ENCODE measurements at regions of chr5 and their contacts with region 1.

Region 1: GRCh38 chr5:140207250-140207964 is 32.4 kb downstream of the CYSTM1 start:
- DNase-seq: no peak
- ATAC-seq: no peak
- H3K4me3 Mint-ChIP-seq: no peak overlapping the region
- H3K27ac Mint-ChIP-seq: no peak overlapping the region; the same call in 1 of the 2 replicates
- H3K4me1 Mint-ChIP-seq: peaks cover 12% of the 10 kb centered on the region
- H3K27me3 Mint-ChIP-seq: no peaks in the 10 kb centered on the region
- CTCF ChIP-seq: no peak

Region 2: DNA sequence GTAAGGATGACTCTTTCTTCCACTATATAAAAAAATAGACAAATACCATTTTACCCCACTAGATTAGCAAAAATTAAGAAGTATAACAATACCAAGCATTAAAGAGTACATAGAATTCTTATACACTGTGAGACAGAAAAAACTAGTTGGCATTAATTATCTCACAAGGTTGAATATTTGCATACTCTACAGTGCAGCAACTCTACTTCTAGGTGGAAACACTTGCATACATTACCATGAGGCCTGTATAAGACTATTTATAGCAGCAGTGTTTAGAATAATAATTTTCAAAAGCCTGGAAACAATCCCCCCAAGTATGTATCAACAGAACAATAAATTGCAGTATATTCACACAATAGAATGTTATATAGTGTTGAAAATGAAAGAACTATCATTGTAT is 112.5 kb before region 1 on chr5:
- CTCF ChIA-PET with region 1: no interaction called
- POLR2A ChIA-PET with region 1: no interaction called
- DNase-seq: no peak
- ATAC-seq: no peak
- H3K4me3 Mint-ChIP-seq: no peak overlapping the region
- H3K27ac Mint-ChIP-seq: no peak overlapping the region
- H3K4me1 Mint-ChIP-seq: no peaks in the 10 kb centered on the region
- H3K27me3 Mint-ChIP-seq: peaks cover 25% of the 10 kb centered on the region
- CTCF ChIP-seq: no peak

Region 3: DNA sequence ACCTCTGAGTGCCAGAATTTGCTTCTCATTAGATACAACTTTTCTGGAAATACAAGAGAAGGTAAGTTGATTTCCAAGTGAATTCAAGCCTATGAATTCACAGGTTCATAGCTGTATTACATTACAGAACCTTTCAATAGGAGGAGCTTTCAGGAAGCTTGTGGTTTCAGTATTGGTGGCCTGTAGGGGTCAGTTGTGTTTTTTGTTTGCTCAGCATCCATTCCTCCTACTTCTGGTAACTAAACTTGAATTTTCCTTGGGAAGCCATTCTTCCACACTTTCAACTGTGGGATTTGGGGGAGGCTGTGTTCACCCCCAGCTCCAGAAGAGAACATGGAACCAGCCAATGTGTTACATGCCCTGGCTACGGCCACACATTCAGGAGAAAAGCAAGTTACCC is 38.0 kb before region 1 on chr5:
- CTCF ChIA-PET with region 1: interaction called, 11 read pairs
- POLR2A ChIA-PET with region 1: no interaction called
- DNase-seq: no peak
- ATAC-seq: peak; percentile 74
- H3K4me3 Mint-ChIP-seq: no peak overlapping the region
- H3K27ac Mint-ChIP-seq: no peak overlapping the region
- H3K4me1 Mint-ChIP-seq: peaks cover 18% of the 10 kb centered on the region
- H3K27me3 Mint-ChIP-seq: peaks cover 19% of the 10 kb centered on the region
- CTCF ChIP-seq: no peak

Region 4: GRCh38 chr5:140182803-140183367 is 24.5 kb before region 1 on chr5:
- CTCF ChIA-PET with region 1: interaction called, 11 read pairs
- POLR2A ChIA-PET with region 1: no interaction called
- DNase-seq: no peak
- ATAC-seq: peak; percentile 67
- H3K4me3 Mint-ChIP-seq: no peak overlapping the region
- H3K27ac Mint-ChIP-seq: no peak overlapping the region; the same call in 1 of the 2 replicates
- H3K4me1 Mint-ChIP-seq: peaks cover 16% of the 10 kb centered on the region
- H3K27me3 Mint-ChIP-seq: no peaks in the 10 kb centered on the region
- CTCF ChIP-seq: no peak

Region 5: GRCh38 chr5:140196115-140196814 is 11.1 kb before region 1 on chr5:
- CTCF ChIA-PET with region 1: interaction called, 16 read pairs
- POLR2A ChIA-PET with region 1: no interaction called
- DNase-seq: no peak
- ATAC-seq: no peak
- H3K4me3 Mint-ChIP-seq: no peak overlapping the region
- H3K27ac Mint-ChIP-seq: no peak overlapping the region
- H3K4me1 Mint-ChIP-seq: peaks cover 19% of the 10 kb centered on the region
- H3K27me3 Mint-ChIP-seq: no peaks in the 10 kb centered on the region
- CTCF ChIP-seq: no peak

Region 6: DNA sequence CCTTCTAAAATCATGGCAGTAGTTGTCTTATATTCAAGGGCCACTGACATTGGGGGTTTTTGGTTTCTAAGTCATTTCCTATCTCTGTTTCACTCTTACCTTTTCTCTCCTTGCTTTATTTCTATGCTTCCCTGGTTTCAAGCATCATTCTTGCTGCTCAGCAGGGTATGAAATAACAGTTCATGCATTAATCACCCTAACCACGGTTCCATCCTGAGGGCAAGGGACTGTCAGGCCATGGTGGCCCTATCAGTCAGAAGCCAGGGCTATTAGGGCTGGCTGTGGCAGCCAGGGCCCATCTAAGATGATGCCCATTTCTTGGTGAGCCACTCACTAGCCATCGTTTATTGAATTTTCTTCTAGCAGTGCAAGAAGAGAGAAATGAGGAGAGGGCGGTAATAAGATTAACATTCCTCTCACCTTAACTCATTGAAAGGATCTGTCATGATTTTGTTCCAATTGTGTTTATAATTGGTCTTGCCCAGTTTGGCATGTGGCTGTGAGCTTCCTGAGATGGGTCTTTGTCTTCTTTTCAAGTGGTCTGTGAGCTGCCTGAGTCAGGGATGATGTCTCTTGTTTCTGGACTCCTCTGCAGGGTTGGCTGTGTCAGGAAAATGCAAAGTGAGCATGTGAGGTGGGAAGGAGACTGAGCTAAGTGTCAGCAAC is 12.8 kb after region 1 on chr5:
- CTCF ChIA-PET with region 1: interaction called, 37 read pairs
- POLR2A ChIA-PET with region 1: no interaction called
- DNase-seq: no peak
- ATAC-seq: no peak
- H3K4me3 Mint-ChIP-seq: no peak overlapping the region
- H3K27ac Mint-ChIP-seq: peak overlapping the region; percentile 29; the same call in 1 of the 2 replicates
- H3K4me1 Mint-ChIP-seq: peaks cover 7% of the 10 kb centered on the region
- H3K27me3 Mint-ChIP-seq: no peaks in the 10 kb centered on the region
- CTCF ChIP-seq: no peak

Region 7: DNA sequence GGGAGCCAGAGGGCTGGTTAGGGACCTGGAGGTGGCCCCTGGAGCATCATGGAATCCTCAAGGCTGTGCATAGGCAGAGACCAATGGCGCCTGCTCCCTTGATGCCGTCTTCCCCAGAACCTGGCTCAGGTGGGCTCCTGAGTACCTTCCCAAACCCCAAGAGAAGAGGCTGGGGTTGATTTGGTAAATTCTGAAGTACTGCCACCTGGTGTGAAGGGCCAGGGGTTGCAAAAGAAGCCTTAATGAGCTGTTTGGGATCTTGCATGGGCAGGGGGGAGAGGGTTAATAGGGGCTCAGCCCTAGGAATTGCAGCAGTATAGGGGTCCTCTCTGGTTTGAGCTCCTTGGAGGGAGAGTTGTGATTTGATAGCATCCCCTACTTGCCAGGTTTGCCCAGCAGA is 19.6 kb after region 1 on chr5:
- CTCF ChIA-PET with region 1: interaction called, 24 read pairs
- POLR2A ChIA-PET with region 1: no interaction called
- DNase-seq: no peak
- ATAC-seq: peak; percentile 73
- H3K4me3 Mint-ChIP-seq: no peak overlapping the region
- H3K27ac Mint-ChIP-seq: no peak overlapping the region
- H3K4me1 Mint-ChIP-seq: no peaks in the 10 kb centered on the region
- H3K27me3 Mint-ChIP-seq: no peaks in the 10 kb centered on the region
- CTCF ChIP-seq: no peak